ENCODE measurements at regions of chr20 and their contacts with region 1.

Region 1: GRCh38 chr20:53146201-53146891 is 174.2 kb downstream of the TSHZ2 start:
- DNase-seq: no peak
- H3K4me3 ChIP-seq: no peak overlapping the region
- H3K27ac ChIP-seq: no peak overlapping the region
- H3K4me1 ChIP-seq: peaks cover 25% of the 10 kb centered on the region
- CTCF ChIP-seq: no peak

Region 2: DNA sequence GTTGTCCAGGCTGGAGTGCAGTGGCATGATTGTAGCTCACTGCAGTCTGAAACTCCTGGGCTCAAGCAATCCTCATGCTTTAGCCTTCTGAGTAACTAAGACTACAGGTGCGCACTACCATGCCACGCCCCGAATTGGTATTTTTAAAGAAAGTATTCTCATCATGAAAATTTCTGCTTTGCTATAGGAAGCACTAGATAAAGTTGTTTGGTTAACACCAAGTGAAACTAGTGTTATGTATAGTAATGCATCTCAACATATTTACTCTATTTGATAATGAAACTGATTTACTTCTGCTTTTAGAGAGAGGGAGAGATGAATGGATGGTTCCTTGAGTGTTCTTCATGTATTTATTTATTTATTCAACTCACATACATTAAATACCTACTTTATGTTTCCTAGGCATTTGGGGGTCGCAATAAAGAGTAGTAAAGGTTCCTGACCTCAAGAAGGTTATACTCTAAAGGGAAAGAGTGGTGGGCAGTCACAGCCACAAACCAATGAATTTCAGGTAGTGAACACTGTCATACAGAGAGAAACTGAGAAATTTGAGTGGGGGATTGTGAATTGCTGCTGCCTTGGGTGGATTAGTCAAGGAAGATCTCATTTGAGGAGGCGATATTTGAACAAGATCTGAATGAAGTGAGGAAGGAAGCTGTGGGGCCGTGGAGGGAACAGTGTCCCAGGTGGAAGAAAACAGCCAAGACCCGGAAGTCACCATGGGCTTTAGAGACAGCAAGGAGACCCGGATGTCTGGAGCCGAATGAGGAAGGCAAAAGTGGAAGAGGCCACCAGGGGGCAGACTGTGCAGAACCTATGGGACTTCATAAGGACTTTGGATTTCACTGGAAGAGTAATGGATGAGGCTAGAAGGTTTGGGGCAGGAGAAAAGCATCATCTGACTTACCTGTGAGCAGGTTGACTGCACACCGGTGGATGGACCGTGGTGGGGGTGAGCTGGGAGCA is 11.4 kb after region 1 on chr20:
- CTCF ChIA-PET with region 1: interaction called, 4 read pairs
- POLR2A ChIA-PET with region 1: interaction called, 13 read pairs
- intact Hi-C with region 1: no loop called
- DNase-seq: peak; percentile 79
- H3K4me3 ChIP-seq: peak overlapping the region; percentile 35
- H3K27ac ChIP-seq: peak overlapping the region; percentile 83
- H3K4me1 ChIP-seq: peaks cover 40% of the 10 kb centered on the region
- CTCF ChIP-seq: peak; percentile 83

Region 3: GRCh38 chr20:53346341-53346660 is 200.0 kb after region 1 on chr20:
- CTCF ChIA-PET with region 1: no interaction called
- POLR2A ChIA-PET with region 1: no interaction called
- intact Hi-C with region 1: no loop called
- DNase-seq: no peak
- H3K4me3 ChIP-seq: no peak overlapping the region
- H3K27ac ChIP-seq: no peak overlapping the region
- H3K4me1 ChIP-seq: no peaks in the 10 kb centered on the region
- CTCF ChIP-seq: no peak

Region 4: GRCh38 chr20:53387983-53388675 is 241.8 kb after region 1 on chr20:
- CTCF ChIA-PET with region 1: no interaction called
- POLR2A ChIA-PET with region 1: no interaction called
- intact Hi-C with region 1: no loop called
- DNase-seq: no peak
- H3K4me3 ChIP-seq: no peak overlapping the region
- H3K27ac ChIP-seq: no peak overlapping the region
- H3K4me1 ChIP-seq: no peaks in the 10 kb centered on the region
- CTCF ChIP-seq: no peak

Measured in OCI-LY7 (cell line).